ENCODE measurements at regions of chr19 and their contacts with region 1.

Region 1: GRCh38 chr19:57389730-57390598 is at the start of gene ZNF548:
- DNase-seq: peak; percentile 85 to 99 (median 92)
- ATAC-seq: peak; percentile 98
- H3K4me3 ChIP-seq: peak within 1 kb of the TSS; percentile 72
- H3K4me3 Mint-ChIP-seq: peak within 1 kb of the TSS; percentile 89 to 100 (median 97)
- H3K27ac ChIP-seq: peak within 1 kb of the TSS; percentile 93
- H3K27ac Mint-ChIP-seq: peak within 1 kb of the TSS; percentile 91 to 100 (median 97)
- H3K4me1 ChIP-seq: peaks cover 13 to 15% of the 10 kb centered on the region in 2 donors
- H3K4me1 Mint-ChIP-seq: peaks cover 11 to 45% (median 29%) of the 10 kb centered on the region in 7 donors
- H3K27me3 ChIP-seq: no peaks in the 10 kb centered on the region
- H3K27me3 Mint-ChIP-seq: no peaks in the 10 kb centered on the region
- total RNA-seq, gene ZNF548: 26.4 to 115 (median 66.9) TPM

Region 2: DNA sequence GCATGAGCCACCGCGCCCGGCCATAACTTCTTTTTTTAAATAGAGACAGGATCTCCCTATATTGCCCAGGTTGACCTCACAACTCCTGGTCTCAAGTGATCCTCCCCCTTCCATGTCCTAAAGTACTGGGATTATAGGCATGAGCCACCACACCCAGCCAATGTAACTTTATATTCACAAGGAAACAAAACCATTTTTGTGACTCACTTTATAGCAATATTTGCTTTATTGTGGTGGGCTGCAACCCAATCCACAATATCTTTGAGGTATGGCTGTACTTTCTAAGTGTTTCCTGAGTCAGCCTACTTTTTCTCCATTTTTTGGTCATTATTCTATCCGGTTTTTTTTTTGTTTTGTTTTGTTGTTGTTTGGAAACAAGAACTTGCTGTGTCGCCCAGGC is 237.0 kb before region 1 on chr19:
- CTCF ChIA-PET with region 1: no interaction called
- POLR2A ChIA-PET with region 1: no interaction called
- intact Hi-C with region 1: no loop called
- DNase-seq: no peak
- ATAC-seq: no peak
- H3K4me3 ChIP-seq: no peak overlapping the region
- H3K4me3 Mint-ChIP-seq: no peak overlapping the region
- H3K27ac ChIP-seq: no peak overlapping the region
- H3K27ac Mint-ChIP-seq: no peak overlapping the region
- H3K4me1 ChIP-seq: no peaks in the 10 kb centered on the region
- H3K4me1 Mint-ChIP-seq: no peaks in the 10 kb centered on the region
- H3K27me3 ChIP-seq: no peaks in the 10 kb centered on the region
- H3K27me3 Mint-ChIP-seq: no peaks in the 10 kb centered on the region

Region 3: GRCh38 chr19:57191141-57192076 is 198.6 kb before region 1 on chr19 and contains the start of gene ZNF264:
- CTCF ChIA-PET with region 1: no interaction called
- POLR2A ChIA-PET with region 1: no interaction called
- intact Hi-C with region 1: loop called in 1 of 2 experiments (anchors 1 kb)
- DNase-seq: peak; percentile 79 to 90 (median 86)
- ATAC-seq: peak; percentile 98
- H3K4me3 ChIP-seq: peak within 1 kb of the TSS; percentile 95
- H3K4me3 Mint-ChIP-seq: peak within 1 kb of the TSS; percentile 90 to 97 (median 94)
- H3K27ac ChIP-seq: peak within 1 kb of the TSS; percentile 85
- H3K27ac Mint-ChIP-seq: peak within 1 kb of the TSS; percentile 92 to 97 (median 95)
- H3K4me1 ChIP-seq: peaks cover 11 to 22% of the 10 kb centered on the region in 2 donors
- H3K4me1 Mint-ChIP-seq: peaks cover 20 to 40% (median 35%) of the 10 kb centered on the region in 7 donors
- H3K27me3 ChIP-seq: no peaks in the 10 kb centered on the region
- H3K27me3 Mint-ChIP-seq: peaks cover 0 to 11% (median 6%) of the 10 kb centered on the region in 5 donors
- total RNA-seq, gene ZNF264: 31.5 to 65.9 (median 44.3) TPM

Region 4: GRCh38 chr19:57302020-57302465 is 87.9 kb before region 1 on chr19:
- CTCF ChIA-PET with region 1: no interaction called
- POLR2A ChIA-PET with region 1: no interaction called
- intact Hi-C with region 1: no loop called
- DNase-seq: no peak
- ATAC-seq: no peak
- H3K4me3 ChIP-seq: no peak overlapping the region
- H3K4me3 Mint-ChIP-seq: no peak overlapping the region
- H3K27ac ChIP-seq: no peak overlapping the region
- H3K27ac Mint-ChIP-seq: no peak overlapping the region
- H3K4me1 ChIP-seq: no peaks in the 10 kb centered on the region
- H3K4me1 Mint-ChIP-seq: peaks cover 0 to 16% (median 6%) of the 10 kb centered on the region in 7 donors
- H3K27me3 ChIP-seq: no peaks in the 10 kb centered on the region
- H3K27me3 Mint-ChIP-seq: no peaks in the 10 kb centered on the region

Region 5: GRCh38 chr19:57338877-57339276 is 51.1 kb before region 1 on chr19:
- CTCF ChIA-PET with region 1: no interaction called
- POLR2A ChIA-PET with region 1: no interaction called
- intact Hi-C with region 1: no loop called
- DNase-seq: no peak
- ATAC-seq: no peak
- H3K4me3 ChIP-seq: no peak overlapping the region
- H3K4me3 Mint-ChIP-seq: no peak overlapping the region
- H3K27ac ChIP-seq: no peak overlapping the region
- H3K27ac Mint-ChIP-seq: no peak overlapping the region
- H3K4me1 ChIP-seq: no peaks in the 10 kb centered on the region
- H3K4me1 Mint-ChIP-seq: no peaks in the 10 kb centered on the region
- H3K27me3 ChIP-seq: no peaks in the 10 kb centered on the region
- H3K27me3 Mint-ChIP-seq: no peaks in the 10 kb centered on the region

Region 6: GRCh38 chr19:57350877-57351805 is 38.8 kb before region 1 on chr19 and contains the start of gene ZNF304:
- CTCF ChIA-PET with region 1: interaction called, 5 read pairs
- POLR2A ChIA-PET with region 1: interaction called, 4 read pairs
- intact Hi-C with region 1: loop called (anchors 1 kb)
- DNase-seq: peak; percentile 51 to 85 (median 76)
- ATAC-seq: peak; percentile 100
- H3K4me3 ChIP-seq: peak within 1 kb of the TSS; percentile 83
- H3K4me3 Mint-ChIP-seq: peak within 1 kb of the TSS; percentile 93 to 97 (median 96)
- H3K27ac ChIP-seq: peak within 1 kb of the TSS; percentile 77
- H3K27ac Mint-ChIP-seq: peak within 1 kb of the TSS; percentile 80 to 96 (median 92)
- H3K4me1 ChIP-seq: peaks cover 11% of the 10 kb centered on the region in 2 donors
- H3K4me1 Mint-ChIP-seq: peaks cover 28 to 43% (median 32%) of the 10 kb centered on the region in 7 donors
- H3K27me3 ChIP-seq: no peaks in the 10 kb centered on the region
- H3K27me3 Mint-ChIP-seq: peaks cover 0 to 11% (median 7%) of the 10 kb centered on the region in 5 donors
- total RNA-seq, gene ZNF304: 6.0 to 12.5 (median 9.0) TPM

Region 7: DNA sequence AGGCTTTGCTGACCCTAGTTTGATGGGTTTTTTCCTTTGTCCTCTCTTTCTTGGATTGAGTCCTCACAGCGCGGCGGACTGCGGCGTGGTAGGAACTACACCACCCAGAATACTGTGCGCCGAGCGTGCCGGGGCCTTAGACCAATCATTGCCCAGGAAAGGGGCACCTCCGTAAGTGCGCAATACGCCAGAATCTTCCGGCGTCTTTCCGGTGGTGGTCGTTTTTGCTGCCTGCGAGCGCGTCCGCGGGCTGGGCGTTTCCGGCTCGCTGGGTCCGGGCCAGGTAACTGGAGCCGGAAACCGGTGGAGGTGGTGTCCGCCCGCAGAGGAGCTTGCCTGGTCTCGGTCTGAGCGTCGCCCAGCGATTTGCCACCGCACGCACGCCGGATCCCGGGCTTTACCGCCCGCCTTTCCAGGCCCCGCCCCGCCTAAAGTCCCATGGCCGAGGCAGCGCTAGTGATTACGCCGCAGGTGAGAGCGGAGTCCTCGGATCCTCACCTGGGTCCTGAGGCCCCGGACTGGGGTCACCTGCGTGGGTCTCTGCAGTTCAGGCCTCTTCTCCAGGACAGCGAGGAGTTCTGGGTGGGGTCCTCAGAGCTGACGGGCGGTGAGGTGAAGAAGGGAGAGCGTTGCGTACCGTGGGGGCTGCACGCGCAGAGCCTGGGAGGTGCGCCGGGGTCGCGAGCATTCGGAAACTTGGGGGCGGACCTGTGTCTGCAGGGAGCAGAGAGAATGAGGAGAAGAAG is 137.3 kb after region 1 on chr19 and contains the start of gene ZNF549:
- CTCF ChIA-PET with region 1: no interaction called
- POLR2A ChIA-PET with region 1: interaction called, 4 read pairs
- intact Hi-C with region 1: loop called in 1 of 2 experiments (anchors 1 kb)
- DNase-seq: peak; percentile 65 to 90 (median 88)
- ATAC-seq: peak; percentile 99
- H3K4me3 ChIP-seq: peak within 1 kb of the TSS; percentile 98
- H3K4me3 Mint-ChIP-seq: peak within 1 kb of the TSS; percentile 89 to 98 (median 96)
- H3K27ac ChIP-seq: peak within 1 kb of the TSS; percentile 94
- H3K27ac Mint-ChIP-seq: peak within 1 kb of the TSS; percentile 80 to 98 (median 95)
- H3K4me1 ChIP-seq: peaks cover 14 to 18% of the 10 kb centered on the region in 2 donors
- H3K4me1 Mint-ChIP-seq: peaks cover 15 to 36% (median 32%) of the 10 kb centered on the region in 7 donors
- H3K27me3 ChIP-seq: no peaks in the 10 kb centered on the region
- H3K27me3 Mint-ChIP-seq: peaks cover 0 to 4% (median 0%) of the 10 kb centered on the region in 5 donors
- total RNA-seq, gene ZNF549: 6.9 to 24.8 (median 11.3) TPM

Region 8: DNA sequence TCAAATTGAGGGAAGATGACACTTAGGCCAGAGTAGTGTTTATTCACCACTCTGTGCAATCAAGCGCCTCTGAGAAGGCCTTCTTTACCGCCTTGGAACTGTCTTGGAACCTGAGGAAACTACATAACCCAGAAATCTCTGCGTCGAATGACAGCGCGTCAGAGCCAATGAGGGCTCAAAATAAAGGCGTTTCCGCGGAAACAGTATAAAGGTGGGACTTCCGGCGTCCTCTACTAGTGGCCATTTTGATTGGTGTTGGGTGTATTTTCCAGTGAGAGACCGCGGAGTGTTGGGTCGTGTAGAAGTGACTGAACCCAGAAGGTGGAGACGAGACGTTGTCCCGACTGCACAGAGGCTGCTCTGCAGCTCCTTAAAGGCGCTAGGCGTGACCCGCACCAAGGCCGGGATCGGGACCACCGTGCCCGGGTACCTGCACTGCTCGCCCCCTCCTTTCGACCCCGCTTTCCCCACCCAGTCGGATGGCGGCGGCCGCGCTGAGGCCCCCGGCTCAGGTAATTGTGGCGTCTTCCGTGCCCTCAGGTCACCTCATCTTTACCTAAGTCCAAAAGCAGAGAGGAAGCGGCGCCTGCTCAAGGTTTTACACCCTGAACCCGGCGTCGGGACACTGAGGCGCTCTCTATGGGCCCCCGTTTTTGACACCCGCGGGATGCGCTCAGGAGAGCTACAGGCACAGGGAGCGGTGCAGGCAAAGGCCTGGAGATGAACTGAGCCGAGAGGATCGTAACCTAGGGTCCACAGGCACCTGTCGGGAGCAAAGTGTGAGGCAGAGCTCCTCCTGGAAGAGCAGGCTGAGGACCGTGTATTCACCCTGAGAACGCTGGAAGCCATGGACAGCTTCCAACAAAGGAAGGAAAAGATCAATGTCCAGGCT is 356.9 kb after region 1 on chr19 and contains the start of gene ZNF776:
- CTCF ChIA-PET with region 1: no interaction called
- POLR2A ChIA-PET with region 1: no interaction called
- intact Hi-C with region 1: loop called in 1 of 2 experiments (anchors 1 kb)
- DNase-seq: peak; percentile 40 to 90 (median 84)
- ATAC-seq: peak; percentile 99
- H3K4me3 ChIP-seq: peak within 1 kb of the TSS; percentile 86
- H3K4me3 Mint-ChIP-seq: peak within 1 kb of the TSS; percentile 91 to 99 (median 94)
- H3K27ac ChIP-seq: peak within 1 kb of the TSS; percentile 85
- H3K27ac Mint-ChIP-seq: peak within 1 kb of the TSS; percentile 81 to 99 (median 94)
- H3K4me1 ChIP-seq: peaks cover 6 to 16% of the 10 kb centered on the region in 2 donors
- H3K4me1 Mint-ChIP-seq: peaks cover 13 to 40% (median 26%) of the 10 kb centered on the region in 7 donors
- H3K27me3 ChIP-seq: no peaks in the 10 kb centered on the region
- H3K27me3 Mint-ChIP-seq: no peaks in the 10 kb centered on the region
- total RNA-seq, gene ZNF776: 18.9 to 52.3 (median 21.8) TPM

Region 9: GRCh38 chr19:58097781-58098681 is 708.1 kb after region 1 on chr19 and contains the start of gene ZSCAN18:
- CTCF ChIA-PET with region 1: no interaction called
- POLR2A ChIA-PET with region 1: no interaction called
- intact Hi-C with region 1: loop called in 1 of 2 experiments (anchors 1 kb)
- DNase-seq: peak; percentile 77 to 100 (median 99)
- ATAC-seq: peak; percentile 97
- H3K4me3 ChIP-seq: peak within 1 kb of the TSS; percentile 86
- H3K4me3 Mint-ChIP-seq: peak within 1 kb of the TSS; percentile 83 to 100 (median 91)
- H3K27ac ChIP-seq: peak within 1 kb of the TSS; percentile 100
- H3K27ac Mint-ChIP-seq: peak within 1 kb of the TSS; percentile 98 to 100 (median 100)
- H3K4me1 ChIP-seq: peaks cover 0 to 11% of the 10 kb centered on the region in 2 donors
- H3K4me1 Mint-ChIP-seq: peaks cover 8 to 18% (median 15%) of the 10 kb centered on the region in 7 donors
- H3K27me3 ChIP-seq: no peaks in the 10 kb centered on the region
- H3K27me3 Mint-ChIP-seq: no peaks in the 10 kb centered on the region
- total RNA-seq, gene ZSCAN18: 8.2 to 100 (median 78.1) TPM